ENCODE measurements at regions of chr19 and their contacts with region 1.

Region 1: GRCh38 chr19:40662921-40663694 is 27.3 kb downstream of the NUMBL start:
- DNase-seq: peak; percentile 93
- ATAC-seq: peak; percentile 86 to 87

Region 2: GRCh38 chr19:40497214-40497613 is 165.9 kb before region 1 on chr19:
- intact Hi-C with region 1: no loop called
- DNase-seq: no peak
- ATAC-seq: no peak

Region 3: GRCh38 chr19:40592170-40592569 is 70.9 kb before region 1 on chr19:
- intact Hi-C with region 1: no loop called
- DNase-seq: no peak
- ATAC-seq: peak in 1 of 2 donors; percentile 11

Region 4: DNA sequence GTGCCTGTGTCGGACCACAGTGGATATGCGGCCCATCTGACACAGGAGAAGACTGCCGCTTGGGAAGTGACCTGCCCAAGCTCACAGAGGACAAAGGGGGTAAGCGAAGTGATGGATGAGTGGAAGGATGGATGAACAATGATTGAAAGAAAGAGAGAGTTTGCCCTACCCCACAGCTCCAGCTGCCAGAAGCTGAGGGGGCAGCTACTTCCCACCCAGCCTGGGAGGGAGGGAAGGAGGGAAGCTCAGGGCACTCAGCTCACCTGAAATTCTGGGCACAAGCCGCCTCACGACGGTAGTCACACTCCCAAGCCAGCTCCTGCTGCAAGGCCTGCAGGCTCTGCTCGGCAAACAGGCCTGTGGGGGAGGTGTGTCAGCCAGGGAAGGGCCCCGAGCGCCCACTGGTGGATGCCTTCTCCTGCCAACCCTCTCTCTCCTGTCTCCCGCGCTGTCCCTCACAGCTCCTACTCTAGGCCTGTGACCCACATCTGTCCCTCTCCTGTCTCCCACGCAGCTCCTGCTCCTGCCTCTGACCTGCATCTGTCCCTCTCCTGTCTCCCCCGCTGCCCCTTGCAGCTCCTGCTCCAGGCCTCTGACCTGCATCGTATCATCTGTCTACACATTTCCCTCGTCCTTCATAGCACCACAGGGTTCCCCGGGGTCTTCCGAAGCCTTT is 39.4 kb after region 1 on chr19:
- intact Hi-C with region 1: loop called in 1 of 2 experiments (anchors 5 kb)
- DNase-seq: no peak
- ATAC-seq: peak; percentile 61 to 81

Region 5: DNA sequence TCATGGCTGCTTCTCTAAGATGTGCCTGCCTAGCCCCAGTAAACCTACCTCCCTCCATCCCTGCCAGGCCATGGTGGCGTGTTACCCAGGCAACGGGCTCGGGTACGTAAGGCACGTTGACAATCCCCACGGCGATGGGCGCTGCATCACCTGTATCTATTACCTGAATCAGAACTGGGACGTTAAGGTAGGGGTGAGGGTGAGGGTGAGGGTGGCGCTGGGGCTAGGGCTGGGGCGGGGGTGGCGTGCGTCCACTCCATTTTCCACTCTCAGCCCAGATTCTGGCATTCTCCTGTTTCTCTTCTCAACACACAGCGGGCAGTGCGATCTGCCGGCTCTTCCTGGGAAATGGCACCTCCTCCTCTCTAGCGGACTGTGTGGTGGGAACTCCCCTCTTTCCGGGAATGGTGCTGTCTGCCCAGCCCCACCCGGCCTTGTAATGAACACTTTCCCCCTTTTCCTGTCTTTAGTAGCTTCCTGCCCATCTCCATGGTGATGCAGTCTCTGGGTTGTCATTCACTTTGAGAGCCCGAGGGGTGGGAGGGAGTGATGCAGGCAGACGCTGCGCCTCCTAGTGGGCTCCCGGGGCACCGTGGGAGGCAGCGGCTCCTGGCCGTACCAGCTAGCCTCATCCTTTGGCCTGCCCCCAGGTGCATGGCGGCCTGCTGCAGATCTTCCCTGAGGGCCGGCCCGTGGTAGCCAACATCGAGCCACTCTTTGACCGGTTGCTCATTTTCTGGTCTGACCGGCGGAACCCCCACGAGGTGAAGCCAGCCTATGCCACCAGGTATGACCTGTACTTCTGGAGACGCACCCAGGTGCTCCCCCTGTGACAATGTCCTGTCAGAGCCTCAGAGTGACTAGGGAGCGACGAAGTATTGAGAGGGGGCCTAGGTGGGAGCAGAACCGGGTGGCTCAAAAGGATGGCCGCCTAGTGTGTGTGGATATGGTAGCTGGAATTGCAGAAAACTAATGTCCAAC is 143.7 kb after region 1 on chr19:
- intact Hi-C with region 1: loop called in 1 of 2 experiments (anchors 10 kb)
- DNase-seq: peak; percentile 89
- ATAC-seq: peak; percentile 32 to 56

Region 6: DNA sequence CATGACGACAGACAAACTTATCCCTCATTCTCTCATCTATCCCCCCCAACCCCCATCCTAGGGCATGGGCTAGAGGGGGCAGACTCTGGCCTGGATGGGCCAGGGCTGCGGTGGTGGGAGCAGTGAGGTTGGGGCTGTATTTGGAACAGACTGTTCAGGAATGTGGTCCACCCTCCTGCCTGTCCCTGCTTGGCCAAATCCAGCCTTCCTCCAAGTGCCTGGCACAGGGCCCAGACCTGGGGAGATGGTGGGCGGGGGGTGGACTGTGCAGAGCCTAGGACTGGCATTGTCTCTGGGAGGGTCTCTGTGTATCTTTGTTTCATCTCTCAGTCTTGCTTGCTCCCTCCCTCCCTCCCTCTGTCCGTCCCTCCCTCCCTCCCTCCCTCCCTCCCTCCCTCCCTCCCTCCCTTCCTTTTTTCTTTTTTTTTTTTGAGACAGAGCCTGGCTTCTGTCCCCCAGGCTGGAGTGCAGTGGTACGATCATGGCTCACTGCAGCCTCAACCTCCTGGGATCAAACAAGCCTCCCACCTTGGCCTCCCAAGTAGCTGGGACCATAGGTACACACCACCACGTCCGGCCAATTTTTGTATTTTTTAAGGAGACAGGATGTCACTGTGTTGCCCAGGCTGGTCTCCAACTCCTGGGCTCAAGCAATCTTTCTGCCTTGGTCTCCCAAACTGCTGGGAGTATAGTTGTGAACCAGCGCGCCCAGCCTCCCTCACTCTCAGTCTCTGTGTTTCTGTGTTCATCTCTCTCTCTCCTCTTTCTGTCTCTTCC is 150.3 kb after region 1 on chr19:
- intact Hi-C with region 1: loop called (anchors 2 to 10 kb)
- DNase-seq: no peak
- ATAC-seq: no peak

Region 7: GRCh38 chr19:41144403-41144802 is 481.3 kb after region 1 on chr19:
- intact Hi-C with region 1: loop called (anchors 2 to 5 kb)
- DNase-seq: peak; percentile 84
- ATAC-seq: peak; percentile 69 to 78

Measured in left cardiac atrium (tissue), 4 donors.